H1 (cell line): ENCODE measurements at regions of chr18 and their contacts with region 1.

Region 1: GRCh38 chr18:28357766-28358401 is 181.0 kb upstream of the CDH2 start:
- DNase-seq: peak in 1 of 2 experiments; percentile 25
- H3K4me3 ChIP-seq: no peak overlapping the region
- H3K27ac ChIP-seq: no peak overlapping the region
- H3K4me1 ChIP-seq: no peaks in the 10 kb centered on the region
- H3K27me3 ChIP-seq: no peaks in the 10 kb centered on the region
- CTCF ChIP-seq: peak; percentile 42 to 83 (median 58)
- EP300 ChIP-seq: no peak
- POLR2A ChIP-seq: no peak
- RAD21 ChIP-seq: peak; percentile 54 to 66

Region 2: DNA sequence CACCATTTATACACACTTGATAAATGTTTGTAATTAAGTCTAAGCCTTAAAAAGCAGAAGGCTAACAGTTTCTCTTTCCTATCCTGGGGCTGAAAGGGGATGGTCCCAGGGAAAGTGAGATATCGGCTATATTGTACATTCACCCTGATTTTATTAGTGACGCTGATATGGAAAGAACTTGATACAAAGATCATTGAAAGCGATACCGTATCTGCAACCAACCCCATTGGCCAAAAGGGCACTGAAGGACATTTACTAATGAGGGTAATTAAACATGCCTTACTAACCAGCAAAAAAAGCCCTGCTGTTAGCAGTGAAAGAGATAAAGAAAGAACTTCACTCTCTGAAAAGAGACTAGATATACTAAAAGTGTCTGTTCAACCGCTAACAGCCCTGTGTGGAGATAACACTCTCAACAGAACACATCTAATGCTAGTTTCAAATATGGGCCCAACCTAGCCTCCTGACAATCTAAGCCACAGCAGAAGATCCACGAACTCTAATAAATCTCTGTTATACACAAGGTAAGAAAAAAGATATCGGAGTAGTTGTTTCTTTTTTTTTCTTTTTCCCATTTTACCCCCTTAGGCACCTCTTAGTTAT is 381.0 kb before region 1 on chr18:
- CTCF ChIA-PET with region 1: no interaction called
- POLR2A ChIA-PET with region 1: no interaction called
- DNase-seq: no peak
- H3K4me3 ChIP-seq: no peak overlapping the region
- H3K27ac ChIP-seq: no peak overlapping the region
- H3K4me1 ChIP-seq: no peaks in the 10 kb centered on the region
- H3K27me3 ChIP-seq: no peaks in the 10 kb centered on the region
- CTCF ChIP-seq: no peak
- EP300 ChIP-seq: no peak
- POLR2A ChIP-seq: no peak
- RAD21 ChIP-seq: no peak

Region 3: GRCh38 chr18:28342231-28342630 is 15.7 kb before region 1 on chr18:
- CTCF ChIA-PET with region 1: interaction called, 21 read pairs
- POLR2A ChIA-PET with region 1: no interaction called
- DNase-seq: no peak
- H3K4me3 ChIP-seq: no peak overlapping the region
- H3K27ac ChIP-seq: no peak overlapping the region
- H3K4me1 ChIP-seq: no peaks in the 10 kb centered on the region
- H3K27me3 ChIP-seq: no peaks in the 10 kb centered on the region
- CTCF ChIP-seq: no peak
- EP300 ChIP-seq: no peak
- POLR2A ChIP-seq: no peak
- RAD21 ChIP-seq: no peak

Region 4: DNA sequence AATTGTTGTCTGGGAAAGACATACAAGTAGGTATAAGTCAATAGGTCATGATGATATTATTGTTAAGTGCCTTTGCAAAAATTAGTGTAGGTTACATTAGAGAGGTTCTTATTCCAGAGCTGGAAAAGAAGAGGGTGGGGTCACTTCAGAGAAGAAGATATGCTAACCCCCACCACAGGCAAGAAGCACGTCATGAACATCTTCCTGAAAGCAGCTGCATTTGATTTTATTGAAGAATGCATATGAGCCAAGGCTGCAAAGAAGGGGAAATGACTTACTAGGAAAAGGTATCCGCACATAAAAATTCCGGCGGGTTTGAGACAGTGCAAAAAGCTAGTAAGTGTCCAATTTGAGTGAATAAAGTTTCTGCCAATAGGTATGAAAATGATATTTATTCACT is 14.3 kb after region 1 on chr18:
- CTCF ChIA-PET with region 1: interaction called, 16 read pairs
- POLR2A ChIA-PET with region 1: no interaction called
- DNase-seq: no peak
- H3K4me3 ChIP-seq: no peak overlapping the region
- H3K27ac ChIP-seq: no peak overlapping the region
- H3K4me1 ChIP-seq: no peaks in the 10 kb centered on the region
- H3K27me3 ChIP-seq: no peaks in the 10 kb centered on the region
- CTCF ChIP-seq: no peak
- EP300 ChIP-seq: no peak
- POLR2A ChIP-seq: no peak
- RAD21 ChIP-seq: no peak

Region 5: GRCh38 chr18:28439870-28440269 is 82.0 kb after region 1 on chr18:
- CTCF ChIA-PET with region 1: no interaction called
- POLR2A ChIA-PET with region 1: no interaction called
- DNase-seq: no peak
- H3K4me3 ChIP-seq: no peak overlapping the region
- H3K27ac ChIP-seq: no peak overlapping the region
- H3K4me1 ChIP-seq: no peaks in the 10 kb centered on the region
- H3K27me3 ChIP-seq: no peaks in the 10 kb centered on the region
- CTCF ChIP-seq: no peak
- EP300 ChIP-seq: no peak
- POLR2A ChIP-seq: no peak
- RAD21 ChIP-seq: no peak